A673 (cell line): ENCODE measurements at regions of chr22 and their contacts with region 1.

Region 1: GRCh38 chr22:18156850-18157713 is 7.1 kb downstream of the USP18 start:
- DNase-seq: peak; percentile 83
- H3K4me3 ChIP-seq: no peak overlapping the region
- H3K27ac ChIP-seq: no peak overlapping the region
- H3K4me1 ChIP-seq: no peaks in the 10 kb centered on the region
- H3K27me3 ChIP-seq: no peaks in the 10 kb centered on the region
- CTCF ChIP-seq: peak; percentile 85

Region 2: DNA sequence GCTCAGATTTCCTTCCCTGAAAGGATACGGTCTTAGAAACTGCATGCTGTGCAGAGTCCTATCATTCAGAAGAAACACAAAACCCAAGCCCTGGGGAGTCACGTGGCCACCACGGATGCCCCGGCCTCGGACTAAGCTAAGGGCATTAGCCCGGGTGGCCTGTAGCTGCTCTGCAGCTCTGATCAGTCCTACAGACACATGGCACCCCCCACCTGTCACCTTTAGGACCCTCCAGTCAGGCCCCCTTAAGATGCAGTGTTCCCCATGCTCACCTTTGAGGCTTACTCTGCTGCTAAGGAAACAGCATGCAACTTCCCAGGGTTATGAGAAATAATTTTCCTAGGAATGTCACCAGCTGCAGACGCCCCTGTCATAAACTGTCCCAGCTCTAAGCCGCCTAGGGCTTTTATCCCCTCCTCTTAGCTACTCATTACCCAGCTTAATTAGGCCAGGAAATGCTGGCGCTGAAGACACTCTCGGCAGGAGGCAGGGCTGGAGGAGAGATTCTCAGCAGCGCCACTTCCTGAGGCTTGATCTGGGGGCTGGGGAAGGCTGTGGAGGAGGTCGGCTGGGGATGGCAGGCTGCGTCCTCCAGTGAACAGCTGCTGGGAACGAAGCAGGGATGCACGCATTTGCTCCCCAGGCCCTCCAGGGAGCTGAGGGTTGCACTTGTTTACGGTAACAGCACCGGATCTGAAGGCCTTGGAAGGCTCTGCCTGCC is 890.7 kb before region 1 on chr22:
- CTCF ChIA-PET with region 1: no interaction called
- POLR2A ChIA-PET with region 1: interaction called, 19 read pairs
- intact Hi-C with region 1: no loop called
- DNase-seq: peak; percentile 98
- H3K4me3 ChIP-seq: peak overlapping the region; percentile 10
- H3K27ac ChIP-seq: peak overlapping the region; percentile 94
- H3K4me1 ChIP-seq: peaks cover 63% of the 10 kb centered on the region
- H3K27me3 ChIP-seq: no peaks in the 10 kb centered on the region
- CTCF ChIP-seq: 0 out of 2 replicates have a peak, but pooled peaks have one; percentile 13

Region 3: DNA sequence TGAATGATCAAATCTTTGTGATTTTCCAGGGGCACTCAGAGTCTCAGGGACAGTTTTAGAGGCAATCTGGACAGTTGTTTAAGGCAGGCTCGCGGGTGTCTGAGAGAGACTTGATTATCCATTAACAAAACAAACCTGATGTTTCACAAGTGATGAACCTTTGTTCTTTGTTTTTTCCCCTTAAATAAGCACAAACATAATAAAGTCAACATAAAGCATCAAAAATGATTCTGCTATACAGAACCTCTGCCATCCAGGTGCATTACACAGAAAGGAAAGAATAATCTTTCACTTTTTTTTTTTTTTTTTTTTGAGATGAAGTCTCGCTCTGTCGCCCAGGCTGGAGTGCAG is 396.0 kb before region 1 on chr22:
- CTCF ChIA-PET with region 1: interaction called, 12 read pairs
- POLR2A ChIA-PET with region 1: no interaction called
- intact Hi-C with region 1: no loop called
- DNase-seq: no peak
- H3K4me3 ChIP-seq: no peak overlapping the region
- H3K27ac ChIP-seq: peak overlapping the region; percentile 37
- H3K4me1 ChIP-seq: no peaks in the 10 kb centered on the region
- H3K27me3 ChIP-seq: no peaks in the 10 kb centered on the region
- CTCF ChIP-seq: no peak